ENCODE measurements at regions of chr18 and their contacts with region 1.

Region 1: DNA sequence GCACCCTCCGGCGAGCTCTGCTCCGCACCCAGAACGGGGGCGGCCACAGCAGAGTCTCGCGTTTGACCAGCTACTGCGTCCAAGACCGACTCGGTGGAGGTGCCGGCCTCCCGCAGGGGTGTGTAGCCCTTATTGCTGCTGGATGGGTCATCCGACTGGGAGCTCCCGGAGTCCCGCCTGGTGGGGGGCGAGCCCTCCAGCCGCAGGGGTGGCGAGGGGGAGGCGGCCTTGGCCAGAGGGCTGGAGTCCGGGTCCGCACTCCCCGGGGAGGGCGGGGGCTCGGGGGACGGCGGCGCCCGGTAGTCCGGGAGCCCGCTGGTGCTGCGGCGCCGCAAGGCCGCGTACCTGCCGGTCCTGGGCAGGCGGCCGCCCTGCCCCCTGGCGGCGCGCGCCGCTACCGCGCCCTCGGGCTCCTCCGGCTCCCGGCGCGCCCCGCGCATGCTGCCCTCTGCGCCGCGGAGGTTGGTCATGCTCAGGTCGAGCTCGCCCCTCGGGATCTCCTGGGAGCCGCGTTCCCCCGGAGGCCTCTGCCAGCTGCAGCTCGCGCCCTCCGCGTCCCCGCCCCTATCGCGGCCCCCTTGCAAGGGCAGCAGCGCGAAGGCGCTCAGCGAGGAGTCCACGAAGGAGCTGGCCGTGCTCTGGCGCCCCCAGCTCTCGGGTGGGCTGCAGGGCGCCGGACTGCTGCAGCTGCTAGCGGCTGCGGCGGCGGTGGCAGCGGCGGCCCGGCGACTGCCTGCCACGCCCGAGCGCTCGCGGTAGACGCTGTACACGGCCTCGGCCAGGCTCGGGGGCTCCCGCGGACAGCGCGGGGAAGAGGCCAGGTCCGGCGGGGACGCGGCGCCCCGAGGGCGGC is 4.8 kb downstream of the TMEM200C start:
- DNase-seq: peak in 1 of 2 experiments; percentile 81
- H3K4me3 ChIP-seq: peak overlapping the region; percentile 36 to 73 (median 62)
- H3K27ac ChIP-seq: no peak overlapping the region
- H3K4me1 ChIP-seq: peaks cover 0 to 18% (median 7%) of the 10 kb centered on the region in 4 experiments; a peak in 6 of 7 replicates
- H3K27me3 ChIP-seq: peaks cover 2 to 15% (median 11%) of the 10 kb centered on the region in 4 experiments
- CTCF ChIP-seq: peak; percentile 65 to 84 (median 84)
- EP300 ChIP-seq: no peak
- POLR2A ChIP-seq: no peak
- RAD21 ChIP-seq: peak in 1 of 2 experiments; percentile 63; a peak in 2 of 4 replicates

Region 2: DNA sequence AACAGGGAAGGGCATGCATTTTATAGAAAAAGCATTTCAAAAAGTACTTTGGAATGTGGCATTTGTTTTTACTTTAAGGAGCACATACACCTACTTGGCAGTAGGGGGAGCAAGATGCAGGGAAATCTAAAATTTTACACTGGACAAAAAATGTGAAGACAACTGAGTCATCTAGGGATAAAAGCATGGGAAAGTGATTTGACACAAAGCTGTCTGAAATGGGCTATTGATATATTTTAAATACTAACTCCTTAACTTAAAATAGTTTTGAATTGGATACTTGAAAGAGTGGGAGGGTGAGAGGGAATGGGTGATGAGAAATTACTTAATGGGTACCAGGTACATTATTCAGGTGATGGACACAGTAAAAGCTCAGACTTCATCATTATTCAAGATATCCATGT is 11.1 kb before region 1 on chr18:
- CTCF ChIA-PET with region 1: interaction called, 46 read pairs
- POLR2A ChIA-PET with region 1: interaction called, 4 read pairs
- DNase-seq: no peak
- H3K4me3 ChIP-seq: no peak overlapping the region
- H3K27ac ChIP-seq: no peak overlapping the region
- H3K4me1 ChIP-seq: no peaks in the 10 kb centered on the region
- H3K27me3 ChIP-seq: no peaks in the 10 kb centered on the region
- CTCF ChIP-seq: peak in 2 of 3 experiments; percentile 42 to 68; a peak in 2 of 4 replicates
- EP300 ChIP-seq: no peak
- POLR2A ChIP-seq: no peak
- RAD21 ChIP-seq: peak; percentile 79 to 85

Region 3: DNA sequence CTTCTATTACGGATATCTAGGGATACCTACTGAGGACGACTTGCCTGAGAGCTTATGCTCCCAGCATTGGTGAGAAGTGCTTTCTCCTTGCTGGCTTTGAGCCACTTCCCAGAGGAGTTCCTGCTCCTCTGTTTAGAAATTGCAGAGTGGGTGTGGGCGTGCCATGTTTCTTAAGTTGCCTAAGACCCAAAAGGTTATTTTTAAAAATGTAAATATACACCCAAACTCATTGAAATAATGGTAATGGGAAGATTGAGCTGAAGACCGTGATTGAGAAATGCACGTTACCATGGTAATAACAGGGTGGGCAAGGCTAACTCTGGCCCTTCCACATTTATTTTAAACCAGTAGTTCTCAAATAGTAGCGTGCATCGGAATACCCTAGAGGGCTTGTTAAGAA is 22.0 kb after region 1 on chr18:
- CTCF ChIA-PET with region 1: interaction called, 9 read pairs
- POLR2A ChIA-PET with region 1: interaction called, 10 read pairs
- DNase-seq: no peak
- H3K4me3 ChIP-seq: no peak overlapping the region
- H3K27ac ChIP-seq: no peak overlapping the region
- H3K4me1 ChIP-seq: peaks cover 0 to 3% (median 2%) of the 10 kb centered on the region in 4 experiments; a peak in 2 of 7 replicates
- H3K27me3 ChIP-seq: no peaks in the 10 kb centered on the region
- CTCF ChIP-seq: no peak
- EP300 ChIP-seq: no peak
- POLR2A ChIP-seq: no peak
- RAD21 ChIP-seq: no peak

Region 4: DNA sequence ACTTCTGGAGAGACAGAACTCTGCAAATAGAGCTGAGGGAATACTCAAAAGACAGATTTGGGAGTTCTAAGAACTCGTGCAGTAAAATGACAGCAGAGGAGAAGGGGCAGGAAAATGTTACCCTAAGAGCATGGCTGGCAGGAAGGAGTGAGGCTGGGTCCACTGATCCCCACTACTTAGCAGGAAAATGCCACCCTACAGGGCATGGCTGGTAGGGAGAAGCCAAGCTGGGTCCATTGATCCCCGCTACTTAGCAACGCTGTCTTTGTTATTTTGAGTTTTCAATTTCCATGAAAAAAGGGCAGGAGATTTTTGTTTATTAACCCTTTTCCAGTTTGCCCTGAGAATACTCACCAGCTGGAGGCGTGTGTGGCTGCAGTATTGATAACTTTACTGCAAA is 105.1 kb after region 1 on chr18:
- CTCF ChIA-PET with region 1: interaction called, 10 read pairs
- POLR2A ChIA-PET with region 1: no interaction called
- DNase-seq: no peak
- H3K4me3 ChIP-seq: peak overlapping the region in 1 of 4 experiments; percentile 30; a peak in 1 of 8 replicates
- H3K27ac ChIP-seq: no peak overlapping the region
- H3K4me1 ChIP-seq: peaks cover 8 to 21% (median 19%) of the 10 kb centered on the region in 4 experiments; a peak in 5 of 7 replicates
- H3K27me3 ChIP-seq: no peaks in the 10 kb centered on the region; a peak in 1 of 7 replicates
- CTCF ChIP-seq: peak in 1 of 3 experiments; percentile 13; a peak in 1 of 4 replicates
- EP300 ChIP-seq: no peak
- POLR2A ChIP-seq: no peak
- RAD21 ChIP-seq: peak in 1 of 2 experiments; percentile 2; a peak in 1 of 4 replicates

Region 5: DNA sequence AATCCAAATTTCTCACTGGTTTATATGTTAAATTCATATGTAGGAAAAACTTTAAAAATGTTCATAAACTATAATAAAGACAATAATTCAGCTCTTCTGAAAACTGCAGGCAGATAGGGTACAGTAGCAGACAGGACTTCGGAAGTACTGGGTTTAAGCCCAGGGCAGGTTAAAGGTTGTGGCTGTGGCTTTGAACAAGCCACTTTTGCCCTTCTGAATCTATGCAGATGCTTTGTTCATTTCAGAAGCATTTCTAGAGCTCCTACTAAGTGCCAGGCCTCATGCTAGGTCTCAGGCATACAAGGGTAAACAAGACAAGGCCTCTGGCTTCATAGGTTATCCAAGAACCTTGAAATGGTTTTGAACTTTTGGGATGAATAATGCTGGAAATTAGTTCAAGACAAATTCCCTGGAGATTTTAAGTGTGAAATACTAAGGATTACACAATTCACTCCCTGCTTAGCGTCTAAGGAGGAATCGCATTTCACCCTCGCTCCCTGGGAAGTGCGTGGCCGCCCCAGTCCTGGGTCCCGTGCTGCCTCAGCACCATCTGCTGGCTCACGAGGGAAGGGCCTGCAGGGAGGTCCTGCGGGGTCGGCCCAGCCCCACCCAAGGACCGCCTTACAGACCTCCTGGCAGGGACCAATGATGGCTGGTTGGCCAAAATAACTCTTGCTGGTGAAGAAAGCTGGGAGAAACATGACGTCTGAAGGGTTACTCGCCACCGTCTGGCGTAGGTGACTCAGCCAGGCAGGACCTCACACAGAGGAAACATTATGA is 591.8 kb after region 1 on chr18:
- CTCF ChIA-PET with region 1: interaction called, 11 read pairs
- POLR2A ChIA-PET with region 1: no interaction called
- DNase-seq: peak; percentile 68 to 80
- H3K4me3 ChIP-seq: no peak overlapping the region
- H3K27ac ChIP-seq: no peak overlapping the region
- H3K4me1 ChIP-seq: peaks cover 3 to 8% (median 6%) of the 10 kb centered on the region in 4 experiments; a peak in 6 of 7 replicates
- H3K27me3 ChIP-seq: no peaks in the 10 kb centered on the region
- CTCF ChIP-seq: peak; percentile 84 to 93 (median 85)
- EP300 ChIP-seq: no peak
- POLR2A ChIP-seq: no peak
- RAD21 ChIP-seq: peak; percentile 99